IMR-90 (cell line): ENCODE measurements at regions of chr10 and their contacts with region 1.

Region 1: GRCh38 chr10:70853457-70853856 is 34.9 kb downstream of the PCBD1 start:
- DNase-seq: no peak
- ATAC-seq: no peak
- H3K4me3 ChIP-seq: no peak overlapping the region
- H3K27ac ChIP-seq: no peak overlapping the region
- H3K4me1 ChIP-seq: peaks cover 5% of the 10 kb centered on the region
- H3K27me3 ChIP-seq: no peaks in the 10 kb centered on the region
- CTCF ChIP-seq: no peak
- POLR2A ChIP-seq: no peak
- RAD21 ChIP-seq: no peak

Region 2: DNA sequence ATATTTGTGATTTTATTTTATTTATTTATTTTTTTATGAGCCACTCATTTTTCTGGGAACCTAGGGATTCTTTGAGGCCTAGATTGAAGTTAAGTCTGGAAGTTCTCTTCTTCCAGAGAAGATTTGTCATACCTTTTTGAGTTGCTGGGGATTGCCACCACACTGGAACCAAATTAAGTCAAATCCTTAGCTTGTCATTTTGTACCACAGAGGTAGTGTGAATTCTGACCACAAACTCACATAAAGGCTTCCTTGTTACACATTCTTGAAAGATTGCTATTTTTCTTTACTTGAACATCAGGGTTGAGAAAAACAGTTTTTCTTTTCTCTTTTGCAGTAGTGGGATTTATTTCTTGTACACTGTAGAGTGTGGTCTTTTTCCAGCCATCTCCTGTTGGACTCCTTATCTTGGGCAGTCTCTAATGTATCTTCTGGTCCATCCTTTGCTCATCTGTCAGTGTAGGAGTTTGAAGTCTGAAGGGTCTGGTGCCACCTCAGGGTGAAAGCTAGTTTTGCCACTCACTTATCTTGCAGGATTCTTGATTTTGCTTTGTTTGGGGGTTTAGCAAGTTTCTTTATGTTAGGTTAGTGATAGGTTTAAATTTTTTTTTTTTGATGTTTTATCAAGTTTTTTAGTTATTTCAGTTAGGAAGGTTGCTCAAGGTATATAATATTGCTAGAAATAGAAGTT is 10.2 kb after region 1 on chr10:
- CTCF ChIA-PET with region 1: interaction called, 12 read pairs
- POLR2A ChIA-PET with region 1: no interaction called
- dilution Hi-C with region 1: no loop called
- in situ Hi-C with region 1: no loop called
- intact Hi-C with region 1: no loop called
- DNase-seq: no peak
- ATAC-seq: no peak
- H3K4me3 ChIP-seq: no peak overlapping the region
- H3K27ac ChIP-seq: no peak overlapping the region
- H3K4me1 ChIP-seq: no peaks in the 10 kb centered on the region
- H3K27me3 ChIP-seq: no peaks in the 10 kb centered on the region
- CTCF ChIP-seq: no peak
- POLR2A ChIP-seq: no peak
- RAD21 ChIP-seq: no peak